A549 (cell line): ENCODE measurements at regions of chr3 and their contacts with region 1.

Region 1: GRCh38 chr3:22887664-22888291 is 315.3 kb upstream of the UBE2E2 start:
- DNase-seq: peak in 1 of 2 experiments; percentile 53
- ATAC-seq: peak in 1 of 2 experiments; percentile 63; a peak in 2 of 6 replicates
- H3K4me3 ChIP-seq: no peak overlapping the region
- H3K27ac ChIP-seq: no peak overlapping the region
- H3K4me1 ChIP-seq: no peaks in the 10 kb centered on the region
- CTCF ChIP-seq: peak; percentile 55
- EP300 ChIP-seq: no peak
- POLR2A ChIP-seq: no peak
- RAD21 ChIP-seq: peak; percentile 57 to 64

Region 2: GRCh38 chr3:22565393-22565792 is 322.4 kb before region 1 on chr3:
- CTCF ChIA-PET with region 1: interaction called, 10 read pairs
- POLR2A ChIA-PET with region 1: no interaction called
- DNase-seq: no peak
- ATAC-seq: no peak
- H3K4me3 ChIP-seq: no peak overlapping the region
- H3K27ac ChIP-seq: no peak overlapping the region
- H3K4me1 ChIP-seq: no peaks in the 10 kb centered on the region
- CTCF ChIP-seq: no peak
- EP300 ChIP-seq: no peak
- POLR2A ChIP-seq: no peak
- RAD21 ChIP-seq: no peak